HepG2 (cell line): ENCODE measurements at regions of chrX and their contacts with region 1.

Region 1: GRCh38 chrX:119477812-119478232 is 9.6 kb downstream of the SLC25A5 start:
- DNase-seq: peak; percentile 85
- ATAC-seq: peak; percentile 78
- H3K4me3 ChIP-seq: peak overlapping the region; percentile 21 to 45 (median 37); a peak in 5 of 6 replicates
- H3K27ac ChIP-seq: peak overlapping the region; percentile 77
- H3K4me1 ChIP-seq: peaks cover 46% of the 10 kb centered on the region
- H3K27me3 ChIP-seq: no peaks in the 10 kb centered on the region
- CTCF ChIP-seq: no peak
- EP300 ChIP-seq: peak; percentile 28 to 51; a peak in 1 of 4 replicates
- POLR2A ChIP-seq: no peak
- RAD21 ChIP-seq: no peak

Region 2: GRCh38 chrX:119495734-119496726 is 18.2 kb after region 1 on chrX:
- CTCF ChIA-PET with region 1: no interaction called
- POLR2A ChIA-PET with region 1: interaction called, 10 read pairs
- in situ Hi-C with region 1: no loop called
- intact Hi-C with region 1: no loop called
- DNase-seq: peak; percentile 75
- ATAC-seq: peak; percentile 96
- H3K4me3 ChIP-seq: peak overlapping the region in 2 of 3 experiments; percentile 24 to 46; a peak in 2 of 6 replicates
- H3K27ac ChIP-seq: peak overlapping the region; percentile 93
- H3K4me1 ChIP-seq: peaks cover 45% of the 10 kb centered on the region
- H3K27me3 ChIP-seq: no peaks in the 10 kb centered on the region
- CTCF ChIP-seq: peak; percentile 40
- EP300 ChIP-seq: peak in 1 of 2 experiments; percentile 67; a peak in 1 of 4 replicates
- POLR2A ChIP-seq: peak in 1 of 2 experiments; percentile 25; a peak in 1 of 4 replicates
- RAD21 ChIP-seq: no peak

Region 3: GRCh38 chrX:119505945-119506344 is 28.1 kb after region 1 on chrX:
- CTCF ChIA-PET with region 1: no interaction called
- POLR2A ChIA-PET with region 1: interaction called, 14 read pairs
- in situ Hi-C with region 1: no loop called
- intact Hi-C with region 1: no loop called
- DNase-seq: peak; percentile 90
- ATAC-seq: peak; percentile 77
- H3K4me3 ChIP-seq: no peak overlapping the region
- H3K27ac ChIP-seq: peak overlapping the region; percentile 67
- H3K4me1 ChIP-seq: peaks cover 64% of the 10 kb centered on the region
- H3K27me3 ChIP-seq: no peaks in the 10 kb centered on the region
- CTCF ChIP-seq: no peak
- EP300 ChIP-seq: peak in 1 of 2 experiments; percentile 23; a peak in 1 of 4 replicates
- POLR2A ChIP-seq: no peak
- RAD21 ChIP-seq: no peak